T-cell (primary cell): ENCODE measurements at regions of chr15 and their contacts with region 1.

Region 1: GRCh38 chr15:60585743-60586708 is 107.1 kb upstream of the ICE2 start:
- DNase-seq: peak in 26 of 35 experiments; percentile 27 to 90 (median 54)
- ATAC-seq: peak in 2 of 4 experiments; percentile 28 to 41
- H3K4me3 ChIP-seq: no peak overlapping the region
- H3K4me3 Mint-ChIP-seq: peak overlapping the region; percentile 46 to 78 (median 69)
- H3K27ac ChIP-seq: peak overlapping the region; percentile 87
- H3K27ac Mint-ChIP-seq: peak overlapping the region; percentile 96 to 97
- H3K4me1 ChIP-seq: peaks cover 29 to 72% of the 10 kb centered on the region in 2 experiments
- H3K4me1 Mint-ChIP-seq: peaks cover 88 to 89% (median 88%) of the 10 kb centered on the region in 3 donors
- H3K27me3 ChIP-seq: peaks cover 0 to 4% of the 10 kb centered on the region in 2 experiments
- H3K27me3 Mint-ChIP-seq: no peaks in the 10 kb centered on the region

Region 2: DNA sequence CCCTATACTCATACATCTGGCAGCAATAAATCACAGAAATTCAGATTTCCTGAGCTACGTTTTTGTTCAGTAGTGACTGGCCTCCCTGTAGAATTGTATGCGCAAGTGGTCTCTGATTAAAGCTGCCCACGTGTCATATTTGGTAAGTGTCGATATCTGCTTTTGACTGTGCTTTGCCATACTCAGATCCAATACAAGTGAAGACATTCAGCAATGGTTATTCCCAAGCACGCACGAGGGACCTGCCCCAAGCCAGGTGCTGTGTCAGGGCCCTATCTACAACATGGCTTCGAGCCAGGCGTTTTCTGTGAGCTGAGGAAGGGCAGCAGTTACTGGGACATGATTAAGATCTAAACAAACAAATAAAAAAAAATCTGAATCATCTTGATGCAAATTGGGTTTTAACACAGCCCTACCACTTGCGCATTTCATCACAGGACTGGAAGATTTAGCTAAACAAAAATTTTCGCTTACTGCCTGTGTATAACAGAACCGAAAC is 59.9 kb before region 1 on chr15:
- CTCF ChIA-PET with region 1: interaction called, 4 to 19 read pairs
- POLR2A ChIA-PET with region 1: interaction called, 3 to 5 read pairs
- DNase-seq: peak in 19 of 35 experiments; percentile 27 to 66 (median 42)
- ATAC-seq: peak in 2 of 4 experiments; percentile 25 to 30
- H3K4me3 ChIP-seq: no peak overlapping the region
- H3K4me3 Mint-ChIP-seq: no peak overlapping the region
- H3K27ac ChIP-seq: peak overlapping the region; percentile 82
- H3K27ac Mint-ChIP-seq: peak overlapping the region; percentile 94 to 96
- H3K4me1 ChIP-seq: peaks cover 3 to 27% of the 10 kb centered on the region in 2 experiments
- H3K4me1 Mint-ChIP-seq: peaks cover 65 to 90% (median 84%) of the 10 kb centered on the region in 3 donors
- H3K27me3 ChIP-seq: no peaks in the 10 kb centered on the region
- H3K27me3 Mint-ChIP-seq: no peaks in the 10 kb centered on the region

Region 3: GRCh38 chr15:60548101-60548500 is 37.9 kb before region 1 on chr15:
- CTCF ChIA-PET with region 1: interaction called in 1 of 2 experiments, 18 read pairs
- POLR2A ChIA-PET with region 1: interaction called, 5 to 11 read pairs
- DNase-seq: peak in 5 of 35 experiments; percentile 21 to 63 (median 29)
- ATAC-seq: peak; percentile 61 to 79 (median 74)
- H3K4me3 ChIP-seq: peak overlapping the region in 1 of 2 donors; percentile 7
- H3K4me3 Mint-ChIP-seq: peak overlapping the region; percentile 57 to 66 (median 65)
- H3K27ac ChIP-seq: peak overlapping the region; percentile 85
- H3K27ac Mint-ChIP-seq: peak overlapping the region; percentile 94 to 95
- H3K4me1 ChIP-seq: peaks cover 49 to 70% of the 10 kb centered on the region in 2 experiments
- H3K4me1 Mint-ChIP-seq: peaks cover 97 to 98% (median 97%) of the 10 kb centered on the region in 3 donors
- H3K27me3 ChIP-seq: no peaks in the 10 kb centered on the region
- H3K27me3 Mint-ChIP-seq: no peaks in the 10 kb centered on the region

Region 4: GRCh38 chr15:60573936-60574335 is 12.1 kb before region 1 on chr15:
- CTCF ChIA-PET with region 1: interaction called in 1 of 2 experiments, 38 read pairs
- POLR2A ChIA-PET with region 1: interaction called, 3 to 56 read pairs
- DNase-seq: peak in 30 of 35 experiments; percentile 37 to 76 (median 53)
- ATAC-seq: peak; percentile 46 to 85 (median 61)
- H3K4me3 ChIP-seq: peak overlapping the region in 1 of 2 donors; percentile 12
- H3K4me3 Mint-ChIP-seq: peak overlapping the region; percentile 69 to 74 (median 73)
- H3K27ac ChIP-seq: peak overlapping the region; percentile 80
- H3K27ac Mint-ChIP-seq: peak overlapping the region; percentile 95 to 96
- H3K4me1 ChIP-seq: peaks cover 56 to 73% of the 10 kb centered on the region in 2 experiments
- H3K4me1 Mint-ChIP-seq: peaks cover 86 to 96% (median 92%) of the 10 kb centered on the region in 3 donors
- H3K27me3 ChIP-seq: no peaks in the 10 kb centered on the region
- H3K27me3 Mint-ChIP-seq: no peaks in the 10 kb centered on the region

Region 5: GRCh38 chr15:60905587-60905986 is 319.6 kb after region 1 on chr15:
- CTCF ChIA-PET with region 1: interaction called in 1 of 2 experiments, 10 read pairs
- POLR2A ChIA-PET with region 1: interaction called in 1 of 2 experiments, 3 read pairs
- DNase-seq: peak in 27 of 35 experiments; percentile 3 to 59 (median 24)
- ATAC-seq: peak; percentile 63 to 80 (median 76)
- H3K4me3 ChIP-seq: no peak overlapping the region
- H3K4me3 Mint-ChIP-seq: no peak overlapping the region
- H3K27ac ChIP-seq: no peak overlapping the region
- H3K27ac Mint-ChIP-seq: no peak overlapping the region
- H3K4me1 ChIP-seq: peaks cover 0 to 5% of the 10 kb centered on the region in 2 experiments
- H3K4me1 Mint-ChIP-seq: peaks cover 14 to 31% (median 22%) of the 10 kb centered on the region in 3 donors
- H3K27me3 ChIP-seq: no peaks in the 10 kb centered on the region
- H3K27me3 Mint-ChIP-seq: no peaks in the 10 kb centered on the region